H1 (cell line): ENCODE measurements at regions of chr6 and their contacts with region 1.

Region 1: GRCh38 chr6:164109770-164110140 is 695.2 kb downstream of the QKI start:
- DNase-seq: peak in 1 of 2 experiments; percentile 61
- H3K4me3 ChIP-seq: no peak overlapping the region
- H3K27ac ChIP-seq: no peak overlapping the region
- H3K4me1 ChIP-seq: no peaks in the 10 kb centered on the region
- H3K27me3 ChIP-seq: no peaks in the 10 kb centered on the region
- CTCF ChIP-seq: peak; percentile 47 to 56 (median 49)
- EP300 ChIP-seq: no peak
- POLR2A ChIP-seq: no peak
- RAD21 ChIP-seq: peak; percentile 71 to 77

Region 2: DNA sequence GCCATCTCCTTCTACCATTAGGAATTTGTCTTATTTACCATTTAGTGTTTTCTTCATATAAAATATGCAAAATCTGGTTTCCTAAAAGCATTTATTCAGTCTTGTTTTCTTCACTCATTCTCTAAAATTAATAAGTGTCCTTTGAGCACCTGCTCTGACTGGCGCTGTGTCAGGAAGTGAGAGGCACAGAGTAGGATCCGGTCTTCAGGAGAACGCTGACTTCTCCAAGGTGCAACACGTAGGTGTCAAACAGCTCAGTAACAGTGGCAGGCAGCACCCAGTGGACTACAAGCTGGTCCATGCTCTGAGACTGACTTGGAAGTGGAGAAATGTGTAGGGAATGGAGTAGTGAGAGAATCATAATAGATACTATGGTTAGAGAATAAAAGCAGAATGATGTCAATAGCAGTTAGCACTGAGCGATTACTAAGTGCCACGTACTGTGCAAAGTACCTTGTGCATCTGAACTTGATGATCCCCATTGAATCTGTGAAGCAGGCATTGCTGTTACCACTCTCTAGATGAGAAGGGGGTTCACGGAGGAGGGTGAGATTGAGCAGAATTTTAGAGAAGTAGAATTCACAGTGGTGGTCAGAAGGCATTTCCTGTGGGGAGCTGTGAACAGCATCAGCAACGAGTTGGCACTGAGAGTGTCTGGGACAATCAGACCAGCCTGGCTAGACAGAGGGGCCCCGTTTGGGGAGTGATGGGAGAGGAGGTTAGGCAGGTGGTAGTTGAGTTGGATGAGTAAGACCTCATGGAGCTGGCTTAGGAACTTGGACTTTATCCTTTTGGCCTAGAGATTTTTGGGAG is 125.4 kb before region 1 on chr6:
- CTCF ChIA-PET with region 1: interaction called, 11 read pairs
- POLR2A ChIA-PET with region 1: interaction called, 3 read pairs
- DNase-seq: no peak
- H3K4me3 ChIP-seq: no peak overlapping the region
- H3K27ac ChIP-seq: no peak overlapping the region
- H3K4me1 ChIP-seq: no peaks in the 10 kb centered on the region
- H3K27me3 ChIP-seq: no peaks in the 10 kb centered on the region
- CTCF ChIP-seq: no peak
- EP300 ChIP-seq: no peak
- POLR2A ChIP-seq: no peak
- RAD21 ChIP-seq: no peak

Region 3: DNA sequence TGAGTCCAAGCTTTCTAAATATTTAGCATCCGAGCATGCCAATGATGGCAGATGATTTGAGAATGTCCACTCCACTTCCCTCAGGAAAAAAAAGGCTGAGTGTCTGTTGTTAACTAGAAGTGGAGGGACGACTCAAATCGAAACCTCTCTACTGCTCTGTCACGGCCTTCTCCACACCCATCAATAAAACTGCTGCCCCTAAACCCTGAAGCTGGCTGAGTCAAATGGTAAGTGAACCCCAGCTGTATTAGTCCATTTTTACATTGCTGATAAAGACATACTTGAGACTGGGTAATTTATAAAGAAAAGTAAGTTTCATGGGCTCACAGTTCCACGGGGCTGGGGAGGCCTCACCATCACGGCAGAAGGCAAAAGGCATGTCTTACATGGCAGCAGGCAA is 11.8 kb after region 1 on chr6:
- CTCF ChIA-PET with region 1: interaction called, 24 read pairs
- POLR2A ChIA-PET with region 1: no interaction called
- DNase-seq: no peak
- H3K4me3 ChIP-seq: no peak overlapping the region
- H3K27ac ChIP-seq: no peak overlapping the region
- H3K4me1 ChIP-seq: peaks cover 0 to 2% (median 0%) of the 10 kb centered on the region in 4 experiments; a peak in 1 of 7 replicates
- H3K27me3 ChIP-seq: no peaks in the 10 kb centered on the region
- CTCF ChIP-seq: no peak
- EP300 ChIP-seq: no peak
- POLR2A ChIP-seq: no peak
- RAD21 ChIP-seq: no peak

Region 4: GRCh38 chr6:164216368-164216767 is 106.6 kb after region 1 on chr6:
- CTCF ChIA-PET with region 1: no interaction called
- POLR2A ChIA-PET with region 1: no interaction called
- DNase-seq: no peak
- H3K4me3 ChIP-seq: no peak overlapping the region
- H3K27ac ChIP-seq: no peak overlapping the region
- H3K4me1 ChIP-seq: no peaks in the 10 kb centered on the region; a peak in 1 of 7 replicates
- H3K27me3 ChIP-seq: no peaks in the 10 kb centered on the region
- CTCF ChIP-seq: no peak
- EP300 ChIP-seq: no peak
- POLR2A ChIP-seq: no peak
- RAD21 ChIP-seq: no peak

Region 5: DNA sequence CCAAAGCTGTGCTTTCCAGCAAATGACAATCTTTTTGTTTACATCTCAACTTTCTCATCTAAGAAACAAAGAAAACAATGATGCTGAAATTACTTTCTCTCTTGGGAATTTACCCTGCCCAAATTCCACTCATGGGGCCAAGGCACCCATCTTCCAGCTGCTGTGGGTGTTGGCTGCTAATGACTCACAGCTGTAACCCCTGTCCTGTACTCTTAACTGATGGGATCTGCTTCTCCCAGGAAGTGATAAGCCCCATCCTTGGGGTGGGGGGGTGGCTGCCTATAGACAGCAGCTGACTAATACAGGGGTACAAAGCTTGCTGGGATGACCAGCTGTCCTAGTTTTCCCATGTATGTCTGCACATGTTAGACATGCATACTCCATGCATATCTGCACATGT is 261.0 kb after region 1 on chr6:
- CTCF ChIA-PET with region 1: no interaction called
- POLR2A ChIA-PET with region 1: no interaction called
- DNase-seq: no peak
- H3K4me3 ChIP-seq: no peak overlapping the region
- H3K27ac ChIP-seq: no peak overlapping the region
- H3K4me1 ChIP-seq: no peaks in the 10 kb centered on the region
- H3K27me3 ChIP-seq: no peaks in the 10 kb centered on the region
- CTCF ChIP-seq: no peak
- EP300 ChIP-seq: no peak
- POLR2A ChIP-seq: no peak
- RAD21 ChIP-seq: no peak